Caki2 (cell line): ENCODE measurements at regions of chr6 and their contacts with region 1.

Region 1: GRCh38 chr6:52664186-52664990 is 6.5 kb upstream of the TMEM14A start:
- DNase-seq: peak; percentile 92

Region 2: DNA sequence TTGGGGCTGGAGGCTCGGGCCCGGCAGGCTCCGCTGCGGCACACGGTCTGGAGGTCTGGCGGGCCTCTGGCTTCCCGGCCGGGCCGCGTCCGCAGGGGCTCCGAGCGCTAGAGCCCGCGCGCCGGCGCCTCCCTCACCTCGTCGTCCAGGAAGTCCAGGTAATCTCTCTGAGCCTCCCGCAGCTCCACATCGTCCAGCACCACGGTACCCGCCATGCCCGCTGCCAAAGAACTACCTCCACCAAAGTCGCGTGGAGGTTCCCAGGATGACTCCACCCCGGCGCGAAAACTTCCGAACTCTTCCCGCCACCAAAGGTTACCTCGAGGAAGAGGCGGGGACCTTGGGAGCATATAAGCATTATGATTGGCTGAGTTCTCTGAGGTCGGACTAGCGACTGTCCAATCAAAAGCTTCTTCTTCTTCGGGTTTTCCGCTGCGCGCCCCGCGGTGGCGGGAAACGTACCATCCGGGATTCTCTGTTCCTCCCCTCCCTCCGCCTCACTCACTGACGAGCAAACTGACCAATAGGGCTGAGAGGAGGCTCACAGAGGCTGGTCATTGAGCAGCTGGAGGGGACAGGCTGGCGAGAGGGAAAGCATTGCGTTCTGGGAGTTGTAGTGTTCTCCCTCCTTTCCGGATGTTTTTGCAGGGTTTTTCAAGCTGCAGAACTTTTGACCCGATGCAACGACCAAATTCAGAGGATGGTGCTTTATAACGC is 379.8 kb before region 1 on chr6 and contains the start of gene MCM3:
- in situ Hi-C with region 1: loop called (anchors 25 kb)
- DNase-seq: peak; percentile 100
- total RNA-seq, gene MCM3: 209 and 231 TPM in 2 replicates

Region 3: DNA sequence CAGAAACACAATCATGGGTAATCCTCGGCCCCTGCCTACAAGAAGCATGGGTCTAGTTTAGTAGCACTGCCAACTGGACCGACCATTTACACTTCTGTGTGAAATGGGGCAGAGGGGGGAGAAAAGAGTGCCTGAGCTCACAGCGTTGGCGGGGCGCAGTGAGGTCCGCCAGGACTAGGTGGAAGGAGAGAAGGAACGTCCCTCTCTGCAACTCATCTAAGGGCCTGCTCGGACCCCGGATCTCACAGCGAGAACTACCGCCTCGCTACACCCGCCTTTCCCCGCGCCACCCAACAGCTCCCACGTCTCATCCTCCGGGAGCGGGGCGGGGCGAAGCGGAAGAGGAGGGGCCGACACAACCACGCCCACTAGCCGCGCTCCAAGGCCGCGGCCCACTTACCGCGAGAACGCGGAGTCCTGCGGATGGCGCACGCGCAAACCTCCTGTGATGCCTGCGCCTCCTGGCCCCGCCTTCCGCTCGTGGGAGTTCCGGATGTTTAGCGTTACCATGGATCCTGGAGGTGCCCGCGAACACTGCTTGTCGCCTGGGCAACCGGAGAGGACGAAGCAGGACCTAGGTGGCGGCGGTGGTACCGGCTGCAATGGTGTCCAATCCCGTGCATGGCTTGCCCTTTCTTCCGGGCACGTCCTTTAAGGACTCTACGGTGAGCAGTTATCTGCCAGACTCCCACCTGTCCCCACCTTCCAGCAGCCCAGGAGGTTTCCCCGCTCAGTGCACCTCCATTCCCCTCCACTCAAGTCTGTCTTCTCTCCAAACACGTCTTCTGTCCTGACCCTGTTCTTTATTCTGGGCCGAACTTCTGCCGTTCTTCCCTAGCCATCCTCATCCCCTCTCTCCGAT is 244.3 kb before region 1 on chr6 and contains the start of gene EFHC1:
- in situ Hi-C with region 1: loop called (anchors 25 kb)
- DNase-seq: peak; percentile 99
- total RNA-seq, gene EFHC1: 22.5 and 30.7 TPM in 2 replicates

Region 4: GRCh38 chr6:52577022-52577777 is 87.2 kb before region 1 on chr6 and contains the start of gene TRAM2:
- in situ Hi-C with region 1: no loop called
- DNase-seq: peak; percentile 84
- total RNA-seq, gene TRAM2: 7.3 and 9.6 TPM in 2 replicates